CD8-positive, alpha-beta memory T cell (primary cell): ENCODE measurements at regions of chr6 and their contacts with region 1.

Region 1: DNA sequence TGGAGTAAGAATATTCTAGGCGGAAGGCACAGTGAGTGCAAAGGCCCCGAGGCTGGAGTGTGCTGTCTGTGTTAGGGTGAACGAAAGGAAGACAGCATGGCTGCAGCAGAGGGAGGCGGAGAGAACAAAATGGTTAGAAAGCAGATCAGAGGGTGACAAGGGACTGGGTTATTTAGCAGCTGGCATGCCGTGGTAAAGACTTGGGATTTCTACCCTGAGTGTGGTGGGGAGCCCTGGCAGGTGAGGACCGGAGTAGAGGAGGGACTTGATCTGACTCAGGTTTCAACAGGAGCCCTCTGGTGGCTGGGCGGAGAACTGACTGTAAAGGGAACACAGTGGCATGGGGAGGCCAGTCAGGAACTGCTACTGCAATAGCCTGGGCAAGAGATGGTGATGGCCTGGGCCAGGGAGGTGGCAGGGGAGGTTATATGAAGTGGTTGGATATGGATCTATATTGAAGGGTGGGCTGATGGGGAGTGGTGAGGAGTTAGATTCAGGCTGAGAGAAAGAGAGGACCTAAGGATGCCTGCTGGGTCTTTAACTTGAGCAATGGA is 38.0 kb downstream of the PIM1 start:
- DNase-seq: peak; percentile 79 to 92 (median 80)
- H3K4me3 ChIP-seq: no peak overlapping the region
- H3K4me3 Mint-ChIP-seq: peak overlapping the region in 5 of 7 donors; percentile 20 to 90 (median 51)
- H3K27ac ChIP-seq: no peak overlapping the region
- H3K27ac Mint-ChIP-seq: peak overlapping the region in 7 of 8 donors; percentile 41 to 95 (median 76)
- H3K4me1 ChIP-seq: peaks cover 50% of the 10 kb centered on the region
- H3K4me1 Mint-ChIP-seq: peaks cover 49 to 60% (median 59%) of the 10 kb centered on the region in 3 donors
- H3K27me3 ChIP-seq: no peaks in the 10 kb centered on the region
- H3K27me3 Mint-ChIP-seq: no peaks in the 10 kb centered on the region

Region 2: DNA sequence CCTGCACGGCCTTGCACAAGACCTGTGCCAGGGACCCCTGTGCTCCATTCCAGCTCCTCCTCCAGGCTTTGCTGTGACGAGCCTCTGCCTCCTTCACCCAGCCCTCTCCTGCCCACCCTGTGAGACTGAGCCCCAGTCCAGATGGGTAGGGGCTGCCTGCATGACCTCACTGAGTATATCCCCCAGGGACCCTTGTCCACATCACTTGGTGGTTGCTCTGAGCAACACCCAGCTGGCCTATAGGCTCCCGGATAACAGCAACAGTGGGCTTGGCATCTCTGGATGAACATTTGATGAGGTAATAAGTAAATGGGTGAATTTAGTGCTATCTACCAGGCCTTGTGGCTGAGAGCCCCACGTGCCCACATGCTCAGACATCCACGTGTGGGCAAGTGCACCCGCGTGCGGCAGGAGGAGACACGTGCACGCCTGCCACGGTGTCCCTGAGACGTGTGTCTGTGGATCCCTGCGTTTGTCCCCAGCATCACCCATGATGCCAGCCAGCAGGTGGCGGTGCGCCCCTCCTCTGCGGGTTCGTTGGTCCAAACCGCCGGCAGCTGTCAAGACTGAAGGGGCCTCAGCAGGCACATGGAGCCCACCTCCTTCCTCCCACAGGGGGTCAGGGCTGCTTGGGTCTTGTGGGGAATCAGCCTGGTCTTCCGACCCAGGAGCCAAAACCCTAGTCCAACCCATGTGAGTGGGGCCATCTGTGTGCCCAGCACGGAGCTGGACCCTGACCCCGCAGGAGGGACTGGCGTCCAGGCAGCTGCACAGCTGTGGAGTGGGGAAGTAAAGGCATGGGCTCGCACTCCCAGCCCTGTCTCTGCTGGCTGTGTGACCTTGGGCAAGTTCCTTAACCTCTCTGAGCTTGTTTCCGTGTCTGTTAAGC is 156.6 kb before region 1 on chr6:
- CTCF ChIA-PET with region 1: interaction called, 78 read pairs
- POLR2A ChIA-PET with region 1: no interaction called
- DNase-seq: peak; percentile 80 to 90 (median 82)
- H3K4me3 ChIP-seq: peak overlapping the region; percentile 75
- H3K4me3 Mint-ChIP-seq: peak overlapping the region; percentile 64 to 95 (median 84)
- H3K27ac ChIP-seq: peak overlapping the region; percentile 91
- H3K27ac Mint-ChIP-seq: peak overlapping the region; percentile 80 to 100 (median 94)
- H3K4me1 ChIP-seq: peaks cover 60% of the 10 kb centered on the region
- H3K4me1 Mint-ChIP-seq: peaks cover 58 to 63% (median 61%) of the 10 kb centered on the region in 3 donors
- H3K27me3 ChIP-seq: no peaks in the 10 kb centered on the region
- H3K27me3 Mint-ChIP-seq: no peaks in the 10 kb centered on the region

Region 3: GRCh38 chr6:37190159-37190535 is 17.8 kb before region 1 on chr6:
- CTCF ChIA-PET with region 1: interaction called, 34 read pairs
- POLR2A ChIA-PET with region 1: interaction called, 3 read pairs
- DNase-seq: no peak
- H3K4me3 ChIP-seq: no peak overlapping the region
- H3K4me3 Mint-ChIP-seq: peak overlapping the region in 1 of 7 donors; percentile 51
- H3K27ac ChIP-seq: peak overlapping the region; percentile 48
- H3K27ac Mint-ChIP-seq: peak overlapping the region in 3 of 8 donors; percentile 14 to 86 (median 51)
- H3K4me1 ChIP-seq: peaks cover 54% of the 10 kb centered on the region
- H3K4me1 Mint-ChIP-seq: peaks cover 48 to 66% (median 59%) of the 10 kb centered on the region in 3 donors
- H3K27me3 ChIP-seq: no peaks in the 10 kb centered on the region
- H3K27me3 Mint-ChIP-seq: no peaks in the 10 kb centered on the region

Region 4: GRCh38 chr6:37607944-37608343 is 400.0 kb after region 1 on chr6:
- CTCF ChIA-PET with region 1: no interaction called
- POLR2A ChIA-PET with region 1: no interaction called
- DNase-seq: no peak
- H3K4me3 ChIP-seq: no peak overlapping the region
- H3K4me3 Mint-ChIP-seq: no peak overlapping the region
- H3K27ac ChIP-seq: no peak overlapping the region
- H3K27ac Mint-ChIP-seq: no peak overlapping the region
- H3K4me1 ChIP-seq: no peaks in the 10 kb centered on the region
- H3K4me1 Mint-ChIP-seq: no peaks in the 10 kb centered on the region
- H3K27me3 ChIP-seq: no peaks in the 10 kb centered on the region
- H3K27me3 Mint-ChIP-seq: peaks cover 8 to 20% of the 10 kb centered on the region in 2 donors